ENCODE measurements at regions of chr4 and their contacts with region 1.

Region 1: DNA sequence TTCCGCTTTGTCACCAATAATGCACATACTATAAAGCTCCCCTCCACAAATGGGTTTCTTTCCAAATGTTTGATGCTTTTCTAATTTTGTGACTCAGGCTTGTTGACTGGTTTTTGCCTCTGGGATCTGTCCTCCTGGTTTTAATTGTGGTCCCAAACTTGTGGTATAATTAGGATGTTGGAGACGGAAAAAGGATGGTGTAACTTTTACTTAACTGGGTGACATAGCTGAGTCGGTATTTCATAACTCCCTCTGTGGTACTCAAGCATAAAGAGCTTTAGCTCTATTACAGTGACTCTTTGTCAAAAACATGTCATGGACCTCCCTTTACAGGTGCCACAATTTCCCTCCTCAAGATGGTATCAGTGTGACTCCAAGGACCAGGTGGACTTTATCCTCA is 119.7 kb upstream of the RBPJ start:
- DNase-seq: no peak
- ATAC-seq: no peak
- H3K4me3 ChIP-seq: no peak overlapping the region
- H3K4me3 Mint-ChIP-seq: no peak overlapping the region
- H3K27ac ChIP-seq: no peak overlapping the region
- H3K27ac Mint-ChIP-seq: no peak overlapping the region
- H3K4me1 ChIP-seq: peaks cover 2 to 41% of the 10 kb centered on the region in 2 experiments
- H3K4me1 Mint-ChIP-seq: peaks cover 36 to 78% (median 64%) of the 10 kb centered on the region in 3 donors
- H3K27me3 ChIP-seq: no peaks in the 10 kb centered on the region
- H3K27me3 Mint-ChIP-seq: peaks cover 0 to 5% of the 10 kb centered on the region in 2 donors

Region 2: DNA sequence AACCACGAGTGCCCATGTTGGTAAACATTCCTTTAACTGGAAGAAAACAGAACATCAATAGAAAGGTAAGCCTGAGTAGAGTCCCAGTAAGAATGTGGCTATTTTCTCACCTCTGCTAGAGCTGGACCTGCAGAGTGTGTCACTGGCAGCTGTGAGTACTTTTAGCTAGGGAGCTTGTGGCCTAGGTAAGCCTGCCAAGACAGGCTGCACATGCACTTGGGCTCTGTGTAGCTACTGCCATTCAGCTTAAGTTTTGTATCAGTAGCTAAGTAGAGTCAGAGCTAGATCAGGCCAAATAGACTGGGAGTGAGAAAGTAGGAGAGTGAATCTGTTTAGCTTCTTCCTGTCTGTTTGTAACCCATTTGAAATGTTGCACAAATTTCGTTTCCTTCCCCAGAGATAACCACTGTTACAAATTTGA is 155.0 kb after region 1 on chr4:
- CTCF ChIA-PET with region 1: no interaction called
- POLR2A ChIA-PET with region 1: interaction called in 1 of 2 experiments, 10 read pairs
- DNase-seq: peak in 1 of 35 experiments; percentile 13
- ATAC-seq: peak; percentile 27 to 45 (median 42)
- H3K4me3 ChIP-seq: no peak overlapping the region
- H3K4me3 Mint-ChIP-seq: no peak overlapping the region
- H3K27ac ChIP-seq: no peak overlapping the region
- H3K27ac Mint-ChIP-seq: no peak overlapping the region
- H3K4me1 ChIP-seq: peaks cover 10 to 15% of the 10 kb centered on the region in 2 experiments
- H3K4me1 Mint-ChIP-seq: peaks cover 32 to 37% (median 34%) of the 10 kb centered on the region in 3 donors
- H3K27me3 ChIP-seq: no peaks in the 10 kb centered on the region
- H3K27me3 Mint-ChIP-seq: no peaks in the 10 kb centered on the region

Region 3: GRCh38 chr4:26687728-26688127 is 486.6 kb after region 1 on chr4:
- CTCF ChIA-PET with region 1: no interaction called
- POLR2A ChIA-PET with region 1: no interaction called
- DNase-seq: no peak
- ATAC-seq: no peak
- H3K4me3 ChIP-seq: no peak overlapping the region
- H3K4me3 Mint-ChIP-seq: no peak overlapping the region
- H3K27ac ChIP-seq: no peak overlapping the region
- H3K27ac Mint-ChIP-seq: no peak overlapping the region
- H3K4me1 ChIP-seq: no peaks in the 10 kb centered on the region
- H3K4me1 Mint-ChIP-seq: no peaks in the 10 kb centered on the region
- H3K27me3 ChIP-seq: no peaks in the 10 kb centered on the region
- H3K27me3 Mint-ChIP-seq: no peaks in the 10 kb centered on the region

Measured in T-cell (primary cell).